ENCODE measurements at regions of chr11 and their contacts with region 1.

Region 1: GRCh38 chr11:66311965-66312548 is 4.8 kb downstream of the CD248 start:
- DNase-seq: peak; percentile 96
- ATAC-seq: peak; percentile 84
- H3K4me3 ChIP-seq: peak overlapping the region; percentile 65
- H3K27ac ChIP-seq: peak overlapping the region; percentile 82
- H3K4me1 ChIP-seq: peaks cover 11% of the 10 kb centered on the region
- H3K27me3 ChIP-seq: no peaks in the 10 kb centered on the region
- CTCF ChIP-seq: peak; percentile 88

Region 2: GRCh38 chr11:66386171-66387069 is 74.4 kb after region 1 on chr11:
- intact Hi-C with region 1: loop called (anchors 10 kb)
- DNase-seq: peak; percentile 90
- ATAC-seq: peak; percentile 92
- H3K4me3 ChIP-seq: peak overlapping the region; percentile 33
- H3K27ac ChIP-seq: no peak overlapping the region
- H3K4me1 ChIP-seq: peaks cover 6% of the 10 kb centered on the region
- H3K27me3 ChIP-seq: peaks cover 5% of the 10 kb centered on the region
- CTCF ChIP-seq: peak; percentile 96

Measured in upper lobe of right lung (tissue), 1 donor.